CD8-positive, alpha-beta memory T cell (primary cell): ENCODE measurements at regions of chr5 and their contacts with region 1.

Region 1: GRCh38 chr5:103232393-103232999 is 26.1 kb upstream of the MACIR start:
- DNase-seq: peak in 2 of 5 donors; percentile 14 to 16
- H3K4me3 ChIP-seq: no peak overlapping the region
- H3K4me3 Mint-ChIP-seq: no peak overlapping the region
- H3K27ac ChIP-seq: no peak overlapping the region
- H3K27ac Mint-ChIP-seq: no peak overlapping the region
- H3K4me1 ChIP-seq: no peaks in the 10 kb centered on the region
- H3K4me1 Mint-ChIP-seq: no peaks in the 10 kb centered on the region
- H3K27me3 ChIP-seq: no peaks in the 10 kb centered on the region
- H3K27me3 Mint-ChIP-seq: peaks cover 13 to 28% of the 10 kb centered on the region in 2 donors

Region 2: DNA sequence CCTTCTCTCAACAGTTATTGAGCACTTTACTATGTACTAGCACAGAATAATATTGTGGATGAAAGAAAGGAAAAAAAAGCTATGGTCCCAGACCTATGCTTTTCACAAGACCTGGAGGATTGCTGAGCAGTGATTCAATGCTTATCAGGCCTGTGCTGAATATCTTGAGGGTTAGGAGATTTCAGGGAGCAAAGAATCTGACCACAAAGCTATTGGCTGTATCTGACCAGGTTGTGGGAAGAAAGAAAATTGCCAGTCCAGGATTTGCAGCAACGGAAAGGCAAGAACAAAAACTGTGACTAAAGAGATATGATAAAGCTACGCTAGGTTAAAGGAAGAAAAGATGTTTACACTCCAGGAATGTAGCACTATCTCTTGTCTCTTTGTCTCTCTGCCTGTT is 11.2 kb after region 1 on chr5:
- CTCF ChIA-PET with region 1: no interaction called
- POLR2A ChIA-PET with region 1: no interaction called
- DNase-seq: no peak
- H3K4me3 ChIP-seq: no peak overlapping the region
- H3K4me3 Mint-ChIP-seq: no peak overlapping the region
- H3K27ac ChIP-seq: no peak overlapping the region
- H3K27ac Mint-ChIP-seq: no peak overlapping the region
- H3K4me1 ChIP-seq: peaks cover 8% of the 10 kb centered on the region
- H3K4me1 Mint-ChIP-seq: peaks cover 8 to 17% (median 10%) of the 10 kb centered on the region in 3 donors
- H3K27me3 ChIP-seq: peaks cover 5% of the 10 kb centered on the region
- H3K27me3 Mint-ChIP-seq: peaks cover 17 to 67% of the 10 kb centered on the region in 2 donors

Region 3: DNA sequence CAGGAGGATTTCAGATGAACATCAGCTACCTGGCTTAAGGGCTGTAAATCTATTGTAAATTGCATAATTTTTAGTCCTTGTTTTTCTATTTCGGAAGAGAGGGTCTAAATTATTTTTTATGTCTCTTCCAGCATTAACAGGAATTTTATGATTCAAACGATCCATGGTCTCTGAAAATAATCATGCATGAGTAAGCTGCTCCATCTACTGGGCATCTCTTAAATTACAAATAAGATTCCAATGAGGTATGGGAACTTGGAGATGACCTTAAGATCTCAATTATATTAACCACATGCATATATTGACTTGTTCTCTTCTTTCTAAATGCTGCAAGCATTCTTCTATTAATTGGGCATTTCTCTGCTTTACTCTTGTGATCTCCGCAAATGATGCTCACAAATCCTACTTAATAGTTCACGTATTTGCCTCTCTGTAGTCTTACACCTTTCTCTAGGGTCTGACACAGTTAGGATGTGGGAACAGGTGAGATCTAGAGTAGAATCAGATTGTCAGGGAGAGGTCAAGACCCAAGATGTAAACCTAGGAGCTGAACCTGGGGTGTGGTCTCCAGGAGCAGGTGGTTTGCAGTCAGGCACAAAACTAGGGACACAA is 243.2 kb after region 1 on chr5:
- CTCF ChIA-PET with region 1: interaction called, 16 read pairs
- POLR2A ChIA-PET with region 1: no interaction called
- DNase-seq: peak in 1 of 5 donors; percentile 16
- H3K4me3 ChIP-seq: no peak overlapping the region
- H3K4me3 Mint-ChIP-seq: no peak overlapping the region
- H3K27ac ChIP-seq: no peak overlapping the region
- H3K27ac Mint-ChIP-seq: no peak overlapping the region
- H3K4me1 ChIP-seq: no peaks in the 10 kb centered on the region
- H3K4me1 Mint-ChIP-seq: no peaks in the 10 kb centered on the region
- H3K27me3 ChIP-seq: no peaks in the 10 kb centered on the region
- H3K27me3 Mint-ChIP-seq: peaks cover 0 to 10% of the 10 kb centered on the region in 2 donors